Heart left ventricle (tissue), 16 donors: ENCODE measurements at regions of chr9 and their contacts with region 1.

Region 1: GRCh38 chr9:68416936-68417564 is 60.6 kb downstream of the PGM5 start:
- DNase-seq: no peak
- ATAC-seq: no peak
- H3K4me3 ChIP-seq: no peak overlapping the region
- H3K27ac ChIP-seq: peak overlapping the region; percentile 34 to 93 (median 86)
- H3K4me1 ChIP-seq: peaks cover 0 to 52% (median 17%) of the 10 kb centered on the region in 12 donors
- H3K27me3 ChIP-seq: no peaks in the 10 kb centered on the region
- CTCF ChIP-seq: peak in 7 of 12 donors; percentile 10 to 30 (median 23)
- POLR2A ChIP-seq: no peak

Region 2: GRCh38 chr9:68437785-68438184 is 20.7 kb after region 1 on chr9:
- intact Hi-C with region 1: loop called in 1 of 10 experiments (anchors 2 kb)
- DNase-seq: peak; percentile 67 to 87 (median 81)
- ATAC-seq: peak; percentile 96 to 97 (median 96)
- H3K4me3 ChIP-seq: no peak overlapping the region
- H3K27ac ChIP-seq: peak overlapping the region in 10 of 12 donors; percentile 6 to 78 (median 50)
- H3K4me1 ChIP-seq: peaks cover 0 to 25% (median 16%) of the 10 kb centered on the region in 12 donors
- H3K27me3 ChIP-seq: no peaks in the 10 kb centered on the region
- CTCF ChIP-seq: no peak
- POLR2A ChIP-seq: no peak

Region 3: DNA sequence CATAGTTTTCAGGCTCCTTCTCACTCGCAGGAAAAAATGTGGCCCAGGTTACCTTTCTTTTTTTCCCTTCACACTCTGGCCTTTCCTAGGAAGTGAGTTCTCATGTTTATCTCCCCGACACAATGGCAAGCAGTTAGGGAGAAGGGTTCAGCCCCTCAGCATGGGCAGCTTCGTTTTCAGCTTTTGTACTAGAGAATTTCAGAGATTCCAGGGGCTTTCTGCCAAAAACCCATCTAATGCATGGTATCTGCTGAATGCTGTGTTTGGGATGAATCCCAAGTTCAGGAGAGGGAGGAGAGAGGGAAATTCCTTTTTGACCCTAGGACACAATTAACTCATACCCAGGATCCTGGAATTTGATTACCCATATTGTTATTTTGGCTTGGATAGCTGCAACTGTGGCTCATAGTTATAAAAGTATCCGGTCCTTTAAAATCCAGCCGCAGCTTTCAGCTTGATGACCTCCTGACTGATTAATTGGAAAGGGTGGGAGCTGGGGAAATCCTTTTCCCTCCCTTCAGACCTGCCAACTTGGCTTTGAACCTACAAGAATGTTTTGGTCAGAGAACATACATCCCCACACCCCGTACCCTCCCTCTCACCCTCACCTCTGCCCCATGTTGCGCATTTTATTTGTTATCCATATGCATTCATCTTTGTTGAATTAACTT is 45.2 kb after region 1 on chr9:
- intact Hi-C with region 1: loop called in 1 of 10 experiments (anchors 10 kb)
- DNase-seq: peak in 1 of 5 donors; percentile 30
- ATAC-seq: peak; percentile 49 to 76 (median 64)
- H3K4me3 ChIP-seq: no peak overlapping the region
- H3K27ac ChIP-seq: peak overlapping the region in 11 of 12 donors; percentile 21 to 72 (median 38)
- H3K4me1 ChIP-seq: peaks cover 0 to 43% (median 23%) of the 10 kb centered on the region in 12 donors
- H3K27me3 ChIP-seq: no peaks in the 10 kb centered on the region
- CTCF ChIP-seq: no peak
- POLR2A ChIP-seq: no peak

Region 4: DNA sequence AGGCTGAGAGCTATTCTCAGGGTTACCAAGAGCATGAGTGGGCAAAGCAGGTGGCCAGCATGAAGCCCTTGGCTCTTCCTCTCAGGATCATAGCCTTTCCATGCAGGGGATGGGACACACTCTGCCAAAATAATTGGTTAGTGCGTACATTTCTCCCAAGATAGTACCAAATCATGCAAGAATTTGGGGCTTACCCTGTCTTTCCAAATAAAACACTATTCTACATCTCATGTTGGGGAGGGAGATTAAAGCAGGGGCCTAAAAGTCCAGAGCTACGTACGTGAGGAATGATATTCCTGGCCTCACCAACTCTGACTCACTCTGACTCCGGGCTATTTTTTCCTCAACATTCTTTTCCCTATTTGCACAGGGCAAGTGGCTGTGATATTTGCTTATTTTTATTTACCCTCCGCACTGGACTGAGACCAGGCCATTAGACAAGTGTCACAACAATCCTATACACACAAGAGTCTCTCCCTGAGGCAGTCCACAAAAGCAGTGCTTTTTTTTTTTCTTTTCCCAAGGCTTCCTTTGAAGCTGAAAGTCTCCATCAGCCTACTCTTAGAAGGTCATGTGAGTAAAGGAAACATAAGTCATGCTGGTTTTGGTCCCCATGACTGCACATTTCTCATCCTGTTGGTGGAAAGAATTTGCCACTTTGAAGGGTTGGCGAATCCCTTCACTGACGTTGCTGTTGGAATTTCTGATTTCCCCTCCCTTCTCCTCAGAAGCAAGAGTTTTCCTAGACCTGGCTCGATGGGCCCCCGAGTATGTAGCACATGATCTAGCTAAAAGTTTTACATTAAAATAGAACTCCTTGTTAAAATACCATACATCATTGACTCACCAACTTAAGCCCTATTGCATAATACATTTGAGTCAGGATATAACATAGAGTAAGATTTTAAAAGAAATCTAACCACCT is 83.7 kb after region 1 on chr9:
- intact Hi-C with region 1: loop called in 2 of 10 experiments (anchors 5 to 10 kb)
- DNase-seq: peak in 1 of 5 donors; percentile 29
- ATAC-seq: peak; percentile 82 to 89 (median 83)
- H3K4me3 ChIP-seq: no peak overlapping the region
- H3K27ac ChIP-seq: peak overlapping the region; percentile 64 to 92 (median 82)
- H3K4me1 ChIP-seq: peaks cover 0 to 81% (median 44%) of the 10 kb centered on the region in 12 donors
- H3K27me3 ChIP-seq: no peaks in the 10 kb centered on the region
- CTCF ChIP-seq: no peak
- POLR2A ChIP-seq: no peak

Region 5: GRCh38 chr9:68546596-68547390 is 129.7 kb after region 1 on chr9:
- intact Hi-C with region 1: no loop called
- DNase-seq: no peak
- ATAC-seq: peak; percentile 51 to 87 (median 67)
- H3K4me3 ChIP-seq: peak overlapping the region in 1 of 12 donors; percentile 23
- H3K27ac ChIP-seq: peak overlapping the region in 6 of 12 donors; percentile 7 to 91 (median 34)
- H3K4me1 ChIP-seq: peaks cover 0 to 43% (median 7%) of the 10 kb centered on the region in 12 donors
- H3K27me3 ChIP-seq: no peaks in the 10 kb centered on the region
- CTCF ChIP-seq: no peak
- POLR2A ChIP-seq: no peak

Region 6: DNA sequence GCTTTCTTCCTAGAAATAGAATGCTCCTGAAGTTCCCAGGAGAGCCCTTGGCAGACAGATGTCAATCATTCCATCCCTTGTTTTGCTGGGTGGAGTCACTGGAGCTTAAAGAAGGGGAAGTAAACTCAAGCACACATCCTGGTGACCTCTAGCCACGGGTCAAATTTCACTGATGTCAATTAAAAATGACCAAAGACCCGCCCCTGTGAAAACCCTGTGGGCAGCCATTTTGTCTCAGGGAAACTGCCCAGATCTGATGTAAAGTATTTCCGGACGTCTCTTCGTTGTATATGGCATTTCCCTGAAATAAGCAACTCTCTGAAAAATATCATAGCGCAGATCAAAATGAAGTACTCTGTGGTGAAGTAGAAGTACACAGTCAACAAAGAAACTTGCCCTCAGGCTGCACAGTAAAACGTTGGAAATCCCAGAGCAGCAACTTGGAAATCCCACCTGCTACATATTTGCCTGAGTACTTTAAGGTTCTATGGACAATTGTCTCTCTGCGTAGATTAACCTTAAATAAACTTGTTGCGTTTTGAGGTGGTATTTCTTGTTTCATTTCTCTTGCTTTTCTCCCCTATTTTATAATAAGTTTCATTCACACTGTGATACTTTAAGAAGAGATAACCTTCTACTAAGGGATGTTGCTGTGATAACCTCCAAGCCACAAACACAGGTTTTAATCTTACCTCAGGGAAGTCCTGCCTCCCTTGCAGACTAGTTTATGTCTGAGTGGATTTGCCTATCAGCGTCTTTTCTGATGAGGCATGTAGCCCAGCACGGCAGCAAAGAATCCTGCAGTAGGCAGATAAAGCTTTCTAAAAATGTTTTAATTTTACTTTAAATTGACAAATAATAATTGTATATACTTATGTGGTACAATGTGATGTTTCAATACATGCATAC is 227.1 kb after region 1 on chr9:
- intact Hi-C with region 1: no loop called
- DNase-seq: no peak
- ATAC-seq: no peak
- H3K4me3 ChIP-seq: no peak overlapping the region
- H3K27ac ChIP-seq: no peak overlapping the region
- H3K4me1 ChIP-seq: peaks cover 0 to 2% (median 0%) of the 10 kb centered on the region in 12 donors
- H3K27me3 ChIP-seq: no peaks in the 10 kb centered on the region
- CTCF ChIP-seq: no peak
- POLR2A ChIP-seq: no peak

Region 7: GRCh38 chr9:69019808-69020207 is 602.8 kb after region 1 on chr9:
- intact Hi-C with region 1: no loop called
- DNase-seq: no peak
- ATAC-seq: peak in 1 of 4 donors; percentile 41
- H3K4me3 ChIP-seq: no peak overlapping the region
- H3K27ac ChIP-seq: no peak overlapping the region
- H3K4me1 ChIP-seq: peaks cover 0 to 7% (median 0%) of the 10 kb centered on the region in 12 donors
- H3K27me3 ChIP-seq: no peaks in the 10 kb centered on the region
- CTCF ChIP-seq: no peak
- POLR2A ChIP-seq: no peak